WTC11 (cell line): ENCODE measurements at regions of chr9 and their contacts with region 1.

Region 1: DNA sequence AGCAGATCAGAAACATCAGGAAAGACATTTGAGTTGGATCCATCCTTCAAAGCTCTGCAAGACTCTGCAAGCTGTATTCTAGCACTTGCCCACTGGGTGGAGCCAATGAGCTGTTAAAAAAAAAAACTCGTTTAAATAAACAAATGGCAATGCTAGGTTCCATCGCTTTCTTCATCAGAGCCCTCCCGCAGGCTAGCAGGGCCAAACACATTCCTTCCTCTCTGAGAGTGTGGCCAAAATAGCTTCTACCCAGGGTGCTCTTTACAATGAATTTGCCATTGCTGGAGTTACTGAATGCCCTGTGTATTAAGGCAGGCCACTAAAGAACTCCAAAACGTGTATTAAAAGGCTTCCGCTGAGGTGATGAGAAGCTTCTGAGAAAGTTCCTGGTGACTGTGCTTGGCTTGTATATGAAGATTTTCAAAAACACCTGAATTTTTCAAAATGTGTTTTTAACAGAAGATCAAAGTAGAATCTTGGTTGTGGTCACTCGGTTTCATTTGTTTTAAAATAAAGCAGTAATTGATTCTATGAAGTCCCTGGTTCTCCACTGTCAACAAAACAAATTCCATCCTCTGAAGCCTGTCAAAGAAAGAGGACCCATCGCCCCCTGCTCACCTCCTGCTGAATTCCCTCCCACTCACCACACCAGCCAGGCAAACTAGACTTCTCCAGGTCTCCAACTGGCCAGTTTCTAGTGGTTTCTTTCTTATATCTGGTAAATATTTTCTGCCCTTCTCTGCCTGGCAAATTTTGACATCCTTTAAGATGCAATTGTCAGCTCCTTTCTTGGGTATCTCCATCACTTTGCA is 36.5 kb upstream of the EQTN start:
- DNase-seq: peak; percentile 75
- ATAC-seq: peak; percentile 96
- H3K4me3 Mint-ChIP-seq: no peak overlapping the region
- H3K27ac Mint-ChIP-seq: peak overlapping the region; percentile 95
- H3K4me1 Mint-ChIP-seq: peaks cover 62% of the 10 kb centered on the region
- H3K27me3 Mint-ChIP-seq: no peaks in the 10 kb centered on the region
- CTCF ChIP-seq: peak; percentile 80

Region 2: GRCh38 chr9:27272103-27272502 is 61.3 kb before region 1 on chr9:
- CTCF ChIA-PET with region 1: no interaction called
- POLR2A ChIA-PET with region 1: no interaction called
- DNase-seq: no peak
- ATAC-seq: no peak
- H3K4me3 Mint-ChIP-seq: no peak overlapping the region
- H3K27ac Mint-ChIP-seq: no peak overlapping the region
- H3K4me1 Mint-ChIP-seq: peaks cover 6% of the 10 kb centered on the region; the same call in 1 of the 2 replicates
- H3K27me3 Mint-ChIP-seq: no peaks in the 10 kb centered on the region
- CTCF ChIP-seq: no peak

Region 3: GRCh38 chr9:27282269-27282668 is 51.2 kb before region 1 on chr9:
- CTCF ChIA-PET with region 1: no interaction called
- POLR2A ChIA-PET with region 1: no interaction called
- DNase-seq: no peak
- ATAC-seq: peak; percentile 76
- H3K4me3 Mint-ChIP-seq: no peak overlapping the region
- H3K27ac Mint-ChIP-seq: no peak overlapping the region
- H3K4me1 Mint-ChIP-seq: peaks cover 11% of the 10 kb centered on the region
- H3K27me3 Mint-ChIP-seq: no peaks in the 10 kb centered on the region
- CTCF ChIP-seq: no peak

Region 4: DNA sequence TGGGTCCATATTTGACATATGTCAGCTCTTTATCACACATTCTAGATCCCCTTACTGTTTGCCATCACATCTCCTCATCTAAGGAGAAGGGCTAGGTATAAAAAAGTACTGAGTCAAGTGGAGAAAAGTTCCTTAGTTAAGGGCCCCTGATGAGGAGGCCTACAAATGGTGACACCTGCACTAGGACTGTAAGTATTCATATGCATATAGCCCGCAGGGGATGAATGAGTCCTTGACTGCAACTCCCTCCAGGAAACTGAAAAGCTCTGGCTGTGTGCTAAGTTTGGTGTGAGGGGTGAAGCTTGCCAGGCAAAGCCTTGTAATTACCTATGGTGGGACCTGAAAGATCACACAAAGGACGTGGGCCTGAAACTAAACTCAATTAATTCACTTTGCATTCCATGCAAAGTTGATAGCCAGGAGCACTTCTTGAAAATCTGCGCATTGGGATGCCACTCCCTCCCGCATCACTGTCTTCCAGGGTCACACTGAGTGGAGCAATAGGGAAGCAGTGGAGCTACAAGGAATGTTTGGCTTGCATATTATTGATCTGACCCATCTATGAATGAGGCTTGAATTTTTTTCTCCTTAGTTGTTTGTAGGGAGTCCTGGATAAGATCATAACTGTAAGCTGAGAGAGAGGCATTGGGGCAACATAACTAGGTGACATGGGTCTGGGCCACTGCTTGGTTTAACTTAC is 24.6 kb before region 1 on chr9:
- CTCF ChIA-PET with region 1: interaction called, 11 read pairs
- POLR2A ChIA-PET with region 1: no interaction called
- DNase-seq: peak; percentile 28
- ATAC-seq: peak; percentile 98
- H3K4me3 Mint-ChIP-seq: peak overlapping the region; percentile 18; the same call in 1 of the 2 replicates
- H3K27ac Mint-ChIP-seq: no peak overlapping the region
- H3K4me1 Mint-ChIP-seq: peaks cover 30% of the 10 kb centered on the region
- H3K27me3 Mint-ChIP-seq: peaks cover 85% of the 10 kb centered on the region
- CTCF ChIP-seq: no peak

Region 5: GRCh38 chr9:27414220-27414761 is 80.8 kb after region 1 on chr9:
- CTCF ChIA-PET with region 1: no interaction called
- POLR2A ChIA-PET with region 1: no interaction called
- DNase-seq: no peak
- ATAC-seq: no peak
- H3K4me3 Mint-ChIP-seq: no peak overlapping the region
- H3K27ac Mint-ChIP-seq: no peak overlapping the region
- H3K4me1 Mint-ChIP-seq: peaks cover 38% of the 10 kb centered on the region
- H3K27me3 Mint-ChIP-seq: no peaks in the 10 kb centered on the region
- CTCF ChIP-seq: no peak

Region 6: DNA sequence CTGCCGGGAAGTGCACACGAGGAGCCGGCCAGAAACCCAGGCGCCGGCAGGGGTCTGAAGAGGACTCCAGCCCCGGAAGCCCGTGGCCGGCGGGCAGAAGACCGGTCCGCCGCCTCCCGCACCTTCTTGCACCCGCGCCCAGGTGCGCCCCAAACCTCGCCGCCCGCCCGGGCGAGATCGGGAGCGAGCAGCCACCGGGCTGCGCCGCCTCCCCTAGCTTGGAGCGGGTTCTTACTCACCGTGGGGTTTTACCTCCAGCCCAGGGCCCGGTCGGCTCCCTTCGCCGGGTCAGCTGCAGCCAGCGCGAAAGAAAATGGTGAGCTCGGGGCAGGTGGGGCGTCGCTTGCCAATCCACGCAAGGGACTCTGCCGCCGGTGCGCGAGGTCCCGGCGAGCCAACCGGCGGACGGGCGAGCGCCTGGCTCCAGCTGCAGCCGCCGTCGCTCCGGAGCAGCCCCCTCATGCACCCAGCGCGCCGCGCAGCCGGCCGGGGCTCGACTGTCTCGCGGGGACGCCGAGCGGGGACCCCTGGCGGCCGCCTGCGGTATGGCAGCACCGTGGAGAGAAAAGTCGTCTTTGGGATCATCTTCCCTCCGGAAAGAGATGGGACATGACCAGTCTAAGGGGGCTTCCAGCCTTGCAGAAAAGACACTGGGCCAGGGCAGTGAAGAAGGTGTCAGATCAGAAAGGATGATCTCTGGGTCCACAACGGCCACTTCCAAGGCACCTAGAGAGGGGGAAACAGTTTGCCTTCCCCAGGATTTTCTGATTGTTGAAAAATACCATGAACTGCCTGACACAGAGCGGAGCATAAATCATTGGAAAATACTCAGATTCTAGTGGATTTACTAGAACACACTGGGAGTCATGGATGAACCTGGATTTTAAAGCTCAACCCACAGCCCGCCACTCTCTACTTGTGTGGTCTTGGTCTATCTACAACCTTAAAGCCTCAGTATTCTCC is 196.2 kb after region 1 on chr9 and contains the start of gene MOB3B:
- CTCF ChIA-PET with region 1: interaction called, 35 read pairs
- POLR2A ChIA-PET with region 1: no interaction called
- DNase-seq: peak; percentile 92
- ATAC-seq: peak; percentile 61
- H3K4me3 Mint-ChIP-seq: peak within 1 kb of the TSS; percentile 94
- H3K27ac Mint-ChIP-seq: peak within 1 kb of the TSS; percentile 73
- H3K4me1 Mint-ChIP-seq: peaks cover 50% of the 10 kb centered on the region
- H3K27me3 Mint-ChIP-seq: peaks cover 3% of the 10 kb centered on the region; the same call in 1 of the 2 replicates
- CTCF ChIP-seq: peak; percentile 98
- total RNA-seq, gene MOB3B: 18.9 to 25.1 TPM (median 20.9 TPM) in 3 replicates

Region 7: GRCh38 chr9:27539479-27540441 is 206.3 kb after region 1 on chr9:
- CTCF ChIA-PET with region 1: interaction called, 49 read pairs
- POLR2A ChIA-PET with region 1: no interaction called
- DNase-seq: no peak
- ATAC-seq: no peak
- H3K4me3 Mint-ChIP-seq: no peak overlapping the region
- H3K27ac Mint-ChIP-seq: peak overlapping the region; percentile 57
- H3K4me1 Mint-ChIP-seq: peaks cover 20% of the 10 kb centered on the region
- H3K27me3 Mint-ChIP-seq: no peaks in the 10 kb centered on the region
- CTCF ChIP-seq: no peak

Region 8: GRCh38 chr9:27548055-27548741 is 214.8 kb after region 1 on chr9:
- CTCF ChIA-PET with region 1: interaction called, 49 read pairs
- POLR2A ChIA-PET with region 1: no interaction called
- DNase-seq: no peak
- ATAC-seq: peak; percentile 41; the same call in 1 of the 2 replicates
- H3K4me3 Mint-ChIP-seq: no peak overlapping the region
- H3K27ac Mint-ChIP-seq: no peak overlapping the region
- H3K4me1 Mint-ChIP-seq: peaks cover 3% of the 10 kb centered on the region
- H3K27me3 Mint-ChIP-seq: no peaks in the 10 kb centered on the region
- CTCF ChIP-seq: 0 out of 2 replicates have a peak, but pooled peaks have one; percentile 45